Gastrocnemius medialis (tissue), 4 donors: ENCODE measurements at regions of chr9 and their contacts with region 1.

Region 1: DNA sequence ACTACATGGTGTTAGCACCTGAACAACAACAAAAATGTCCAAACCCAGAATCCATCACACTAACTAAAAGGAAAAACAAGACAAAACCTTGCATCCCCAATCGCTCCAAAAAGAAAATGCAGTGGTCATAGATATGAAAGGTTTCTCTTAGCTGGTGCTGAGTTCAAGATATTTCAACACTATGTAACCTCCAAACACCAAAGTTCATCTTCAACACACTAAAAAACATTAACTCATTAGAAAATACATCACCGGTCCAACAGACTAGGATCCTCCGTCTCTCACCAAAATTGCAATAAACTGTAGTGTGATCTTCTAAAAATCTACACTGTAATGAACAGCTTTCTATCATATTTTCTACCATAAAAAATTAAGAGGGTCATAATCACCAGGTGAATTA is 60.8 kb downstream of the ECPAS start:
- DNase-seq: no peak
- ATAC-seq: no peak
- H3K4me3 ChIP-seq: no peak overlapping the region
- H3K27ac ChIP-seq: no peak overlapping the region
- H3K4me1 ChIP-seq: peaks cover 0 to 8% of the 10 kb centered on the region in 2 donors
- H3K27me3 ChIP-seq: no peaks in the 10 kb centered on the region
- CTCF ChIP-seq: no peak
- POLR2A ChIP-seq: no peak

Region 2: GRCh38 chr9:110142868-110143462 is 1280.4 kb before region 1 on chr9:
- in situ Hi-C with region 1: no loop called
- intact Hi-C with region 1: no loop called
- DNase-seq: no peak
- ATAC-seq: no peak
- H3K4me3 ChIP-seq: no peak overlapping the region
- H3K27ac ChIP-seq: peak overlapping the region in 1 of 4 donors; percentile 26
- H3K4me1 ChIP-seq: peaks cover 11 to 24% of the 10 kb centered on the region in 2 donors
- H3K27me3 ChIP-seq: no peaks in the 10 kb centered on the region
- CTCF ChIP-seq: no peak
- POLR2A ChIP-seq: no peak

Region 3: DNA sequence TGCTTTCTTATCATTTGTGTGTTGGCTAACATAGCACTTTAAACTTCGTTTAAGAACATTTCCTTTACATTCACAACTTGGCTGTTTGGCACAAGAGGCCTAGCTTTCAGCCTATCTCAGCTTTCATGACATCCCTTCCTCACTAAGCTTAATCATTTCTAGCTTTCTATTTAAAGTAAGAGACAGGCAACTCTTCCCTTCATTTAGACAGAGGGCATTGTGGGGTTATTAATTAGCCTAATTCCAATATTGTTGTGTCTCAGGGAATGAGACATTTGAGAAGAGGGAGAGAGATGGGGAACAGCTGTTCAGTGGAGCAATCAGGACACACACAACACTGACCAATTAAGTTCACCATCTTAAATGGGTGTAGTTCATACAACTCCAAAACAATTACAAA is 42.4 kb before region 1 on chr9:
- in situ Hi-C with region 1: no loop called
- intact Hi-C with region 1: loop called (anchors 5 kb)
- DNase-seq: no peak
- ATAC-seq: no peak
- H3K4me3 ChIP-seq: no peak overlapping the region
- H3K27ac ChIP-seq: no peak overlapping the region
- H3K4me1 ChIP-seq: no peaks in the 10 kb centered on the region
- H3K27me3 ChIP-seq: no peaks in the 10 kb centered on the region
- CTCF ChIP-seq: no peak
- POLR2A ChIP-seq: no peak

Region 4: DNA sequence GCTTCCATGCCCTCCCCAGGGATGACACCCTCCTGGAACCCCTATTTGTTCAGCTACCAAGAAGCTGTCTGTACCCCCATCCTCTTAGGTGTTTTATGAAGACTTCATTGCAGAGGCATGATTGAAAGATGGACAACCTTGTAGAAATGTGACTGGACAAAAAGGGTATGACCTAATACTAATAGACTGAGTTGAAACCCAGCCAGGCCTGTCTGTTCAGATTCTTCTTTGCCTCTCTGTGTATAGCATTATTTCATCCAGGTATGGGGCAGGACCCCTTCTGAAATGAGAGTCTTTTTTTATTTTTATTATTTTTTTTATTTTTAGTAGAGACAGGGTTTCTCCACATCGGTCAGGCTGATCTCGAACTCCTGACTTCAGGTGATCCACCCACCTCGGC is 68.0 kb after region 1 on chr9:
- in situ Hi-C with region 1: no loop called
- intact Hi-C with region 1: no loop called
- DNase-seq: no peak
- ATAC-seq: no peak
- H3K4me3 ChIP-seq: no peak overlapping the region
- H3K27ac ChIP-seq: no peak overlapping the region
- H3K4me1 ChIP-seq: no peaks in the 10 kb centered on the region
- H3K27me3 ChIP-seq: no peaks in the 10 kb centered on the region
- CTCF ChIP-seq: no peak
- POLR2A ChIP-seq: no peak